CD4-positive, alpha-beta memory T cell (primary cell): ENCODE measurements at regions of chr21 and their contacts with region 1.

Region 1: DNA sequence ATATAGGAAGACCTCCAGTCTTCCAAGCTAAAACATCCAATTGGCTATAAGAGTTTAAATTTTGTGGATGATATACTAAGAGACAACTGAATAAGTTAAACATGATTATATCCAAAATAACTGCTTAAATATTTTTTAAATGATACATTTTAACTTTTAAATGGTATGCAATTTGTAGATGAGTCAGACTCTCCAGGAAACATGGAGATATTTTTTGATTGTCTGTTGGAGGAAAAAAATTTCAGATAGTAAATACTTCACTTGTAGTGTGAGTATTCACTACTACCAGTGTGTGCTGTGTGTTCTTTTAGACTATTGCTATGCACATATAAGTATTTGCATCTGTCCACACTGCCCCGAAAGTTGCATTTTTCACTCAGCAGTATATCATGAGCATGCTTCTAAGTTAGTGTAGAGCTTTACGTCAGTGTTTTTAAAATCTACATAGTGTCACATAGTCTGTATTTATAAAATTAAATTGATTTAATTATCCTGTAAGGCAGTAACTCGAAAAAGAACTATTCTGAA is 91.1 kb downstream of the USP25 start:
- DNase-seq: no peak
- H3K4me3 ChIP-seq: no peak overlapping the region
- H3K4me3 Mint-ChIP-seq: no peak overlapping the region
- H3K27ac ChIP-seq: no peak overlapping the region
- H3K27ac Mint-ChIP-seq: peak overlapping the region in 1 of 7 donors; percentile 29
- H3K4me1 ChIP-seq: peaks cover 32% of the 10 kb centered on the region
- H3K4me1 Mint-ChIP-seq: peaks cover 32 to 44% (median 38%) of the 10 kb centered on the region in 4 donors
- H3K27me3 ChIP-seq: no peaks in the 10 kb centered on the region
- H3K27me3 Mint-ChIP-seq: no peaks in the 10 kb centered on the region

Region 2: DNA sequence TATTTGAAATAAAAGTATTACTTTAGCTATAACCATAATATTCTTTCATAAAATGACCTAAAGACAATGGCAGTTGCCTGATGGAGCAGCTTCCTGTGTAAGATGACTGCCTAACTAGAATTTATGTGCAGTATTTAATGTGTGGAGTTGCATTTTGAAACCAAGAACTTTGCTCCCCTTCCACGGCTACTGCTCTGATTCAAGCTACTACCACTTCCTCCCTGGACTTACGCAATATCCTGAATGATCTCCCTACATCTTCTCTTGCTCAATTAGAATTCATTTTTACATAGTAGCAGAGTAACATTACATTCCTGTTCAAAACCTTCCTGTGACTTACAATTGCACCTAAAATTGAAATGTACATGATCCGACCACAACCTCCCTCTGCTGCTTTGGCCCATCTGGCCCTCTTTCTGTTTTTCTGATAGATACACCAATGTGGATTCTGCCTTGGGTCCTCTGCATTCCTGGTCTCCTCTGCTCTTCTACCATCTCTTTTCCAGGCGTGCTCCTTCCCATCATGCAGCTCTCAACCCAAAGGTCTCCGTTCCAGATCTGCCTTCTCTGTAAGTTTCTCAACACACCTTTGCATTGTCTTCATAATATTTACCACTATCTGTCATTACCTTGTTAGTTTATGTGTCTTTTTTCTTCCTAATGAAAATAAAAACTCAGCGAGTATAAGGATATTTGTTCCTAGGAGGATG is 138.6 kb before region 1 on chr21:
- CTCF ChIA-PET with region 1: interaction called, 3 read pairs
- POLR2A ChIA-PET with region 1: no interaction called
- intact Hi-C with region 1: loop called (anchors 5 kb)
- DNase-seq: peak in 1 of 5 donors; percentile 8
- H3K4me3 ChIP-seq: no peak overlapping the region
- H3K4me3 Mint-ChIP-seq: no peak overlapping the region
- H3K27ac ChIP-seq: no peak overlapping the region
- H3K27ac Mint-ChIP-seq: peak overlapping the region in 1 of 7 donors; percentile 17
- H3K4me1 ChIP-seq: no peaks in the 10 kb centered on the region
- H3K4me1 Mint-ChIP-seq: peaks cover 5 to 6% (median 6%) of the 10 kb centered on the region in 4 donors
- H3K27me3 ChIP-seq: no peaks in the 10 kb centered on the region
- H3K27me3 Mint-ChIP-seq: peaks cover 2 to 3% of the 10 kb centered on the region in 2 donors